Astrocyte of the cerebellum (primary cell): ENCODE measurements at regions of chr17 and their contacts with region 1.

Region 1: GRCh38 chr17:3636154-3636907 is at the starts of genes CTNS and SHPK:
- DNase-seq: peak; percentile 86
- H3K4me3 ChIP-seq: peak within 1 kb of the TSS; percentile 95
- CTCF ChIP-seq: no peak

Region 2: GRCh38 chr17:2965563-2966235 is 670.6 kb before region 1 on chr17:
- in situ Hi-C with region 1: no loop called
- DNase-seq: no peak
- H3K4me3 ChIP-seq: no peak overlapping the region
- CTCF ChIP-seq: no peak

Region 3: GRCh38 chr17:3474212-3474611 is 162.1 kb before region 1 on chr17:
- in situ Hi-C with region 1: no loop called
- DNase-seq: no peak
- H3K4me3 ChIP-seq: no peak overlapping the region
- CTCF ChIP-seq: no peak

Region 4: DNA sequence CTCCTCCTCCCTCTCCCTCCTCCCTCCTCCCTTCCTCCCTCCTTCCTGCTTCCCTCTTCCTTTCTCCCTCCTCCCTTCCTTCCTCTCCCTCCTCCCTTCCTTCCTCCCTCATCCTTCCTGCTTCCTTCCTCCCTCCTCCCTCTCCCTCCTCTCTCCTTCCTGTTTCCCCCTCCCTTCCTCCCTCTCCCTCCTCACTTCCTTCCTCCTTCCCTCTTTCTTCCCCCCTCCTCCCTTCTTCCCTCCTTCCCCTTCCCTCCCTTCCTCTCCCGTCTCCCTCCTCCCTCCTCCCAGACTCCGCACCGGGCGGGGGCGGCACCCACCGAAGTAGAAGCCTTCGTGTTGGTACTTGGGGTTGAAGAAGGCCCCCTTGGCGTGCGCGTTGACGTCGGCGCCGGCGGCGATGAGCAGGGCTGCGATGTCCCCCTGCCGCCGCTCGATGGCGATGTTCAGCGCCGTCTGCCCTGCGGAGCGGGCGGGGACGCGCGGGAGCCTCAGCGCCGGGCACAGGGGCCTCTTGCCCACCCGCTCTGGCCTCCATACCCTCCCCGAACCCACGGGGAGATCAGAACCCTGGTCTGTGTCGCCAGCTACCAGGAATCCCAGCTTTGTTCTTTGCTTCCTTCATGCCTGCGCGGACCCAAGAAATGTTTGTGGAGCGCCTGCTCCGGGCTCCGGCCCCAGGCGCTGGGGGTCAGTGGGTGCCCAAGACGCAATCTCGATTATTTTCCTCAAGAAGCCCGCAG is 100.9 kb before region 1 on chr17:
- in situ Hi-C with region 1: loop called (anchors 10 kb)
- DNase-seq: peak; percentile 19
- H3K4me3 ChIP-seq: peak overlapping the region; percentile 43
- CTCF ChIP-seq: peak; percentile 75

Region 5: DNA sequence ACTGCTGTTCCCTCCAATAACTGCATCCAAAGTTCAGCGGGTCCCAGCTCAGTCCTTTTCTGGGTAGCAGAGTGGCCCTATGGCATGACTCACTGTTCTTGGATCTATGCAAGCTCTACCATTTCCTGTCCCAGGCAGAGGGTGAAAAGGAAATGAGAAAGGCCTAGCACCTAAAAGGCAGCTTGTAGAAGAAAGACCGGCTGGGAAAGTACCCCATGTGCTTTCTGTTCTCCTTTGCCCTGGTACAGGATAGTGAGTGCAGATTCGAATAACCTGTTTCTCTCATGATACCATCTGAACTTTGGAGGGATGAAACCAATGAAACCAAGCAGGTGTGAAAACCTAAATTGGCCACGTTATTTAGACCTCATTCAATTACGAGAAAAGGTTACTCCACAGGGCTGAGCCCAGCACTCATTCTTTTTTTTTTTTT is 74.6 kb after region 1 on chr17:
- in situ Hi-C with region 1: no loop called
- DNase-seq: no peak
- H3K4me3 ChIP-seq: no peak overlapping the region
- CTCF ChIP-seq: no peak